Activated CD4-positive, alpha-beta T cell treated with anti-CD3 and anti-CD28 coated beads, Interleukin-2, amount 10 ng/mL, durations not matched to agents 7 days and 5 days (primary cell): ENCODE measurements at regions of chr5 and their contacts with region 1.

Region 1: DNA sequence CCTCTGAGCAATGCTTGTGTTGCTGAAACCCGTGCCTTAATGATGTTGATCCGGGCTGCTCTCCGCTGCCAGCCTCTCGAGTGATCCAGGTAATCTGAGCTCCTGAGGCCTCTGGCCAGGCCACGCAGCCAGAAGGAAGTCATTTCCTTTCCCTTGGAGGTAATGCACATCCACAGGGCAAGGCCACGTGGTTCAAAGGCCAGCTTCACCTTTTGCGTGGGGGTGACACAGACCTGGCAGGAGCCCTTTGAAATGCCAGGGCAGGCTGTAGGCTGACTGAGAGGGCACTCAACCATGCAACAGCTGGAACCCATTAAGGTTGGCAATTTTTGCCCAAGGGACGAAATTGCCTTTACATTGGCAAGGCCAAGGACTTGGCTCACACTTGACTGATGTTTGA is 80.4 kb downstream of the LIX1 start:
- DNase-seq: no peak
- H3K4me3 Mint-ChIP-seq: no peak overlapping the region
- H3K27ac Mint-ChIP-seq: no peak overlapping the region
- H3K4me1 Mint-ChIP-seq: peaks cover under 1% of the 10 kb centered on the region
- H3K27me3 Mint-ChIP-seq: peaks cover 7% of the 10 kb centered on the region

Region 2: DNA sequence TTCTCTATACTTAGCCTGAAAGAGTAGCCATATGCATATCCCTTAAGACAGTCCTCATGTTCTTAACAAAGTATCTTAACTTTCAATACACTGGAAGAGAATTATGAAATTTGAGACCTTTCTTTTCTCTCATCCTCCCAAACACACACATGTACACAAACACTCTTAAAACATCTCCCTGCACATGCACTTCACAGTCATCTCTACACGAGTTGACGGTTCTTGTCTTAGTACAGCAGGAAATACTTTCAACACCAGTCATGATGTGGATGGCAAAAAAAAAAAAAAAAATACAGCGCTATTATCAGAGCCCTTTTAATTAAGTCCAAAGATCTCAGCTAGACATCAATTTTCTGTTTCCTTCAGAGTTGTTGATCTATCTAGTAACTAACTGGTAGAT is 585.4 kb before region 1 on chr5:
- CTCF ChIA-PET with region 1: no interaction called
- POLR2A ChIA-PET with region 1: no interaction called
- DNase-seq: no peak
- H3K4me3 Mint-ChIP-seq: no peak overlapping the region
- H3K27ac Mint-ChIP-seq: no peak overlapping the region
- H3K4me1 Mint-ChIP-seq: no peaks in the 10 kb centered on the region
- H3K27me3 Mint-ChIP-seq: peaks cover 12% of the 10 kb centered on the region

Region 3: GRCh38 chr5:97046270-97046982 is 15.6 kb before region 1 on chr5:
- CTCF ChIA-PET with region 1: interaction called, 13 read pairs
- POLR2A ChIA-PET with region 1: no interaction called
- DNase-seq: no peak
- H3K4me3 Mint-ChIP-seq: no peak overlapping the region
- H3K27ac Mint-ChIP-seq: no peak overlapping the region
- H3K4me1 Mint-ChIP-seq: peaks cover 8% of the 10 kb centered on the region
- H3K27me3 Mint-ChIP-seq: peaks cover 11% of the 10 kb centered on the region

Region 4: DNA sequence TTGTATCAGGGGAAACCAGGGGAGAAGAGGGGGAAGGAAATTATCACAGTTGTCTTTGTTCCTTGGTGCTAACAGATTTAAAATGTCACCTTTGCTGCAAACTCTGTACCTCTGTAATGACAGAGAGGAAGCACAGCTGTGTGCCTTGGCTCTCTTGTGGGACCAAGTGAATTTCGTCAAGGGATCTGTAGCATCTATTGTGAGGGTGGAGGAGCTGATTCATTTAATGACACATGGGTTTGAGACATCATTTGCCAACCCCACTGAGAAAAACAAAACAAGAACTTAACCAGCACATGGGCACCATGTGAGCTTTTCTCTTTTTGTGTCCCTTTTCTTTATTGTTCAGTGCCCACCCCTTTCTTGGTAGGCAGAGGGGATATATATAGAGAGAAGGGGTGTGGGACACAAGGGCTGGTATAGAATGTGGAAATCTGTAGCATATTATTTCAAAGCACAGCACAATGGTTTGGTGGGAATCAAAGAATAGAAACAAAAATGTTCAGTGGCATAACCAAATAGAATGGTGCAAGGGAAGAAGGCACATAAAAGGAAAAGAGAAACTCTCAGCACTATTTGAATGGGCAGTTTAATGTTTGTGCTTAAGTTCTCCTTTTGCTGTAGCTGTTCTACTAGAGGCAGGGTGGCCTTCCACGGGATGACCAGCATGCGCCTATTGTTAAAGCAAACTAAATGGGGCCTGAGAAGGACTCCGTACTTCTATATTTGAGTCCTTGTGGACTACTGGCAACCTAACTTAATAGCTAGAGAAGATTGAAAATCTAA is 17.1 kb after region 1 on chr5:
- CTCF ChIA-PET with region 1: no interaction called
- POLR2A ChIA-PET with region 1: no interaction called
- DNase-seq: no peak
- H3K4me3 Mint-ChIP-seq: no peak overlapping the region
- H3K27ac Mint-ChIP-seq: no peak overlapping the region
- H3K4me1 Mint-ChIP-seq: peaks cover 21% of the 10 kb centered on the region
- H3K27me3 Mint-ChIP-seq: peaks cover 6% of the 10 kb centered on the region